GM13977 (cell line): ENCODE measurements at regions of chr2 and their contacts with region 1.

Region 1: GRCh38 chr2:98835831-98836385 is 100.1 kb downstream of the CRACDL start:
- DNase-seq: no peak
- CTCF ChIP-seq: no peak

Region 2: GRCh38 chr2:98654699-98655495 is 181.0 kb before region 1 on chr2:
- in situ Hi-C with region 1: loop called (anchors 5 kb)
- DNase-seq: peak; percentile 35
- CTCF ChIP-seq: no peak